ENCODE measurements at regions of chr12 and their contacts with region 1.

Region 1: DNA sequence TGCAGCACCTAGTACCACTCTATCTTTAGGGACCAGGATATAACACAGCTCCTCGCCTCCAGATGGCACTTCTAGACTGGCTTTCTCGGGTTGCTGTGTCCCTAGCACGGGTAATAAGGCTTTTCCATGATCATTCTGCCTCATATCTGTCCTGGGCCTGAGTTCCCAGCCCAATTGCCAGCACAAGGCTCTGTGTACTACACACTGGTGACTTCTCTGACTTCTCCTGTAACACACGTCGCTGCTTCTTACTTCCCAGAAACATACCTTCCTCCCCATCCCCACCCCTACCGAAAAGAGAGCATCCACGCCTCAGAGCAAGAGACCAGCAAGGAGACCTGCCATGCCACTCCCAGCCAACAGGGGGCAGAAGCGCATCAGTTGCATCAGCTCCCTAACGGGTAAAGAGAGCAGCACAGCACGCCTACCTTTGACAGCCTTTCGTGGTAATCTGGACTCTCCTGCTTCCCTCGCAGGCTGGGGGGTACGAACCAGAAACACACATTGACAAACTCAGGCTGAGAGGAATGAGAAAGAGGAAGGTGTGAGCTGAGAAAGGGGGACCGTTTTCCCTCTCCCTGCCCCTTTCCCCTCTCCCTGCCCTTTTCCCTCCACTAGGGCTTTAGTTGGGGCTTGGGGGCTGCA is 21.2 kb upstream of the ZNF740 start:
- DNase-seq: peak; percentile 83 to 85 (median 85)
- H3K4me3 ChIP-seq: no peak overlapping the region
- H3K4me3 Mint-ChIP-seq: peak overlapping the region in 2 of 8 donors; percentile 2 to 54
- H3K27ac ChIP-seq: no peak overlapping the region
- H3K27ac Mint-ChIP-seq: peak overlapping the region in 4 of 7 donors; percentile 3 to 87 (median 44)
- H3K4me1 ChIP-seq: peaks cover 10% of the 10 kb centered on the region
- H3K4me1 Mint-ChIP-seq: peaks cover 5 to 8% (median 6%) of the 10 kb centered on the region in 4 donors
- H3K27me3 ChIP-seq: no peaks in the 10 kb centered on the region
- H3K27me3 Mint-ChIP-seq: no peaks in the 10 kb centered on the region

Region 2: DNA sequence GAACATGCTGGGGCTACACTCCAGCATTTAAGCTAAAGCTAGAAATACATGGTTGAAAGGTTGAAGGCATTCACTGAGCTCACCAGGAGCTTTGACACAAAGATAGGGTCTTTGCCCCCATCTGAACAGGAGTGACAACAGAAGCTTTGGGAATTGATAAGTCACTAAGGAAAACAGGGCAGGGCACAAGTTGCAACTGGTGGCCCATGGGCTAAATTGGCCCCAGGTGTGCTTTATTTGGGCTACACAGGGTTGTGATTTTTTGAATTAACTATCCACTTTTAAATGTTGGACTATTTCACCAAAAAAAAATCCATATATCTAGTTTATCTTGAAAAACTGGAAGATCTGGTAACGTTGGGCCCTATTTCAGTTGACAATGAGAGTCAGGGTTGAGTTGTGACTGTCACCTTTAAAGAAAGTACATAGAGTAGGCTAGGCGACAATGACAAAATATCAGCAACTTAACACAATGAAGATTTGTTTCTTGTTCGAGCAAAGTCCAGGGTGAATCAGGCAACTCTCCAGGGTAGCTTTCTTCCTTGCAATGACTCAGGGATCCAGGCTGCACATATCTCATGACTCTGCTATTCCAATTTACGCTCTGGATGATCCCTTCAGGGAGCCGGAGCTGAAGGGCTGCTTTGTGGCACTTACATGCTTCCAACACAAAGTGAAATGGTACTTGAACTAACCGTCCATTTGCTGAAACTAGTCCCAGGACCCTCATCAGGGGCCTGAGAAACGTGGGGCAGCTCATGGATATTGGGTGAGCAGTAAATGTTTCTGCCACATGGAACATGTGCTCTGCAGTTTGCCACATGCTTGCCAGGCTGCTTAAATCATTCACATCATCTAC is 166.4 kb before region 1 on chr12:
- CTCF ChIA-PET with region 1: no interaction called
- POLR2A ChIA-PET with region 1: no interaction called
- intact Hi-C with region 1: no loop called
- DNase-seq: no peak
- H3K4me3 ChIP-seq: no peak overlapping the region
- H3K4me3 Mint-ChIP-seq: no peak overlapping the region
- H3K27ac ChIP-seq: no peak overlapping the region
- H3K27ac Mint-ChIP-seq: peak overlapping the region in 1 of 7 donors; percentile 2
- H3K4me1 ChIP-seq: no peaks in the 10 kb centered on the region
- H3K4me1 Mint-ChIP-seq: no peaks in the 10 kb centered on the region
- H3K27me3 ChIP-seq: no peaks in the 10 kb centered on the region
- H3K27me3 Mint-ChIP-seq: peaks cover 0 to under 1% of the 10 kb centered on the region in 2 donors

Region 3: DNA sequence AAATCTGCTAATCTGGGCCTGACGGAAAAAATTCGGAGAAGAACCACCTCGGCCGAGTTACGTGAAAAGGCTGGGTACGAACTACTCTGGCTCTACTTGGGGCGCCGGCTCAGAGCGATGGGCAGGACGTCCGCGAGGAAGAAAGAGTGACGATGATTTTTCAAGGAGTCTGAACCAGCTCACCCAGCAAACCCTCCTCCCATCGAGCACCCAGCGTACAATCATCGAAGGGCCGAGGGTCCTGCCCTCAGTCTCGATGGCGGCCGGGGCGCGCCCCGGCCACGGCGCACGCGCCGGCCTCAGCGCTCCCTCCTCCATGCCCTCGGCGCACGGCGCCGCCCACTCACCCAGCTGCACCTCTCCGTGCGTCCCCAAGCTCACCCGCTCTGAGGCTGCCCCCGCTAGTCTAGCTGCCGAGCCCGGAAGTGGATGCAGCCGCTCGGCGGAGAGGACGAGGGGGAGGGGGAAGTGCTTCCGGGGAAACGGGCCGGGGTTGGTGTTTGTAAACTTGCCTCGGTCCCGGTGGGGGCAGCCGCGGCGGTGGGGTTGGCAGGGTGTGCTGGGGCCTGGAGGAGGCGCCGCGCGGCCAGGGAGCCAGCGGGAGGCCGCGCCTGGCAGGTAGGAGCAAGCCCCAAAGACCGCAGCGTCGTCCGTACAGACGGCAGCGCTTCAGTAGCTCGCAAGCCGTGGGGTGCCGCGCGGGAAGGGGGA is 21.1 kb after region 1 on chr12 and contains the starts of genes CSAD and ZNF740:
- CTCF ChIA-PET with region 1: interaction called, 51 read pairs
- POLR2A ChIA-PET with region 1: interaction called, 17 read pairs
- intact Hi-C with region 1: loop called (anchors 1 kb)
- DNase-seq: peak; percentile 96 to 99 (median 97)
- H3K4me3 ChIP-seq: peak within 1 kb of the TSS; percentile 56 to 74
- H3K4me3 Mint-ChIP-seq: peak within 1 kb of the TSS; percentile 90 to 96 (median 91)
- H3K27ac ChIP-seq: peak within 1 kb of the TSS; percentile 89
- H3K27ac Mint-ChIP-seq: peak within 1 kb of the TSS; percentile 88 to 98 (median 97)
- H3K4me1 ChIP-seq: peaks cover 50% of the 10 kb centered on the region
- H3K4me1 Mint-ChIP-seq: peaks cover 36 to 62% (median 49%) of the 10 kb centered on the region in 4 donors
- H3K27me3 ChIP-seq: no peaks in the 10 kb centered on the region
- H3K27me3 Mint-ChIP-seq: no peaks in the 10 kb centered on the region
- total RNA-seq, gene CSAD: 62.5 to 64.2 TPM
- total RNA-seq, gene ZNF740: 109 to 113 TPM

Region 4: DNA sequence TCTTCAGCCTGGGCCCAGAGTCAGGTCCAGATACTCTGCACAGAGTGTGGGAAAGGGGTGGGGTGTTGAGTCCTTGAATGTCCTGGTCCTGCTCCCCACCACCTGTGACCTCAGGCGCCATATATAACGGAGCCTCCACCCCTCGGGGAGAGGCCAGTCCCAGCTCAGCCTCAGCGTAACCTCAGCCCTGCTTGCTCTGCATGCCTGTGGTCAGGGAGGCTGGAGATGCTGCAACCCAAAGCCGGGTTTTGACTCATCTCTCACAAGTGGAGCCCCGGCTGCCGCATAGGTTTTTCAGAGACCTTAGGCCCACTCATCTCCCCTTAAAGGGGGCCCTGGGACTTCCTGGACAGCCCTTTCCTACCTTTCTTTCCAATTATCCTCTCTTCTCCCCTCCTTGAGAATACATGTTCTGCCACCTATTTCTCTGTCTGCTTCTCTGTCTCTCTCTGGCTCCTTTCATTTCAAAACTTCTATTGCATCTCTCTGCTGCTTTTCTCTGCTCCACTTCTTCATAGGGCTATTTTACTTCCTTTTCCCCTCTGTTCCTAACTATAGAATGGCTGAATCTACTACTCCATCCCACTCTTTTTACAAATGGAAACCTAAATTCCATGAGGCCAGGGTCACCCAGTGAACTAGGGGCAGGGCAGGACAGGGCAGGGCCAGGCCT is 46.6 kb after region 1 on chr12:
- CTCF ChIA-PET with region 1: interaction called, 52 read pairs
- POLR2A ChIA-PET with region 1: interaction called, 3 read pairs
- intact Hi-C with region 1: loop called (anchors 2 kb)
- DNase-seq: peak in 4 of 5 donors; percentile 32 to 80 (median 41)
- H3K4me3 ChIP-seq: peak overlapping the region; percentile 85 to 88
- H3K4me3 Mint-ChIP-seq: peak overlapping the region; percentile 81 to 98 (median 88)
- H3K27ac ChIP-seq: peak overlapping the region; percentile 79
- H3K27ac Mint-ChIP-seq: peak overlapping the region; percentile 76 to 96 (median 91)
- H3K4me1 ChIP-seq: peaks cover 99% of the 10 kb centered on the region
- H3K4me1 Mint-ChIP-seq: peaks cover 40 to 84% (median 64%) of the 10 kb centered on the region in 4 donors
- H3K27me3 ChIP-seq: no peaks in the 10 kb centered on the region
- H3K27me3 Mint-ChIP-seq: no peaks in the 10 kb centered on the region

Region 5: GRCh38 chr12:53251477-53252348 is 92.4 kb after region 1 on chr12:
- CTCF ChIA-PET with region 1: interaction called, 19 read pairs
- POLR2A ChIA-PET with region 1: interaction called, 4 read pairs
- intact Hi-C with region 1: loop called (anchors 1 kb)
- DNase-seq: peak; percentile 67 to 78 (median 71)
- H3K4me3 ChIP-seq: peak overlapping the region; percentile 73 to 92
- H3K4me3 Mint-ChIP-seq: peak overlapping the region; percentile 96 to 100 (median 98)
- H3K27ac ChIP-seq: peak overlapping the region; percentile 83
- H3K27ac Mint-ChIP-seq: peak overlapping the region; percentile 96 to 99 (median 98)
- H3K4me1 ChIP-seq: peaks cover 46% of the 10 kb centered on the region
- H3K4me1 Mint-ChIP-seq: peaks cover 23 to 52% (median 41%) of the 10 kb centered on the region in 4 donors
- H3K27me3 ChIP-seq: no peaks in the 10 kb centered on the region
- H3K27me3 Mint-ChIP-seq: no peaks in the 10 kb centered on the region

Region 6: DNA sequence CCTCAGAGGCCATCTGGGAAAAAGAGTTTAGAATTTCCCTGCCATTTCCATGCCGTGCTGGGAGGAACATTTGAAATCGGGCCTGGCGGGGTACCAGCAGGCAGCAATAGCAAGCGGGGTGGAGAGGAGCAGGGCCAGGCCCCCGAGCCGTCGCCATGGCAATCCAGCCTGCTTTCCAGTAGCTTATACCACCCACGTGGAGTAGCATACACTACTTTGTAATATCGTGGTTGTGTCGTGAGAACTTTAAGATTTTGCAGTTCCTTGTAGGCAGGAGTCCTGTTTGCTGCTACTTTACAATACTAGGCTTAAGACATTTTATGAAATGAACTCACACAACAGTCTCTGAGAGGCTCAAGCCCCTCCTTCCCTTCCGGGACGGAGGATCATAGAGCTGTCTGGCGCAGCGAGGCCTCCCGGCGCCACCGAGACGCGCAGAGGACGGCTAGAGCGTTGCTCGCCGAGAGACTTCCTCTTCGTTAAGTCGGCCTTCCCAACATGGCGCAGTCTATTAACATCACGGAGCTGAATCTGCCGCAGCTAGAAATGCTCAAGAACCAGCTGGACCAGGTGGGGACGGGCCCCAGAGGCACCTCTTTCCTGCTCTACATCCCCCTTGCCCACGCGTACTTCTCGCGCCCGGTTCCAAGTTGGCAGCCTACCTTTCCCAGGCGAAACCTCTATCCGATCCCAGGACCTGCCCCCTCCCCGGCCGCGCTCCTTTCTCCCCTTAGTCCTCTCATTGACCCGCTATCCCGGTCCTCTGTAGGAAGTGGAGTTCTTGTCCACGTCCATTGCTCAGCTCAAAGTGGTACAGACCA is 136.0 kb after region 1 on chr12 and contains the start of gene PFDN5:
- CTCF ChIA-PET with region 1: interaction called, 165 read pairs
- POLR2A ChIA-PET with region 1: interaction called, 5 read pairs
- intact Hi-C with region 1: loop called (anchors 2 kb)
- DNase-seq: peak; percentile 87 to 93 (median 91)
- H3K4me3 ChIP-seq: peak within 1 kb of the TSS; percentile 63 to 94
- H3K4me3 Mint-ChIP-seq: peak within 1 kb of the TSS; percentile 98 to 100 (median 99)
- H3K27ac ChIP-seq: peak within 1 kb of the TSS; percentile 81
- H3K27ac Mint-ChIP-seq: peak within 1 kb of the TSS; percentile 97 to 100 (median 99)
- H3K4me1 ChIP-seq: peaks cover 49% of the 10 kb centered on the region
- H3K4me1 Mint-ChIP-seq: peaks cover 23 to 59% (median 44%) of the 10 kb centered on the region in 4 donors
- H3K27me3 ChIP-seq: no peaks in the 10 kb centered on the region
- H3K27me3 Mint-ChIP-seq: no peaks in the 10 kb centered on the region
- total RNA-seq, gene PFDN5: 717 to 718 TPM